ENCODE measurements at regions of chr3 and their contacts with region 1.

Region 1: DNA sequence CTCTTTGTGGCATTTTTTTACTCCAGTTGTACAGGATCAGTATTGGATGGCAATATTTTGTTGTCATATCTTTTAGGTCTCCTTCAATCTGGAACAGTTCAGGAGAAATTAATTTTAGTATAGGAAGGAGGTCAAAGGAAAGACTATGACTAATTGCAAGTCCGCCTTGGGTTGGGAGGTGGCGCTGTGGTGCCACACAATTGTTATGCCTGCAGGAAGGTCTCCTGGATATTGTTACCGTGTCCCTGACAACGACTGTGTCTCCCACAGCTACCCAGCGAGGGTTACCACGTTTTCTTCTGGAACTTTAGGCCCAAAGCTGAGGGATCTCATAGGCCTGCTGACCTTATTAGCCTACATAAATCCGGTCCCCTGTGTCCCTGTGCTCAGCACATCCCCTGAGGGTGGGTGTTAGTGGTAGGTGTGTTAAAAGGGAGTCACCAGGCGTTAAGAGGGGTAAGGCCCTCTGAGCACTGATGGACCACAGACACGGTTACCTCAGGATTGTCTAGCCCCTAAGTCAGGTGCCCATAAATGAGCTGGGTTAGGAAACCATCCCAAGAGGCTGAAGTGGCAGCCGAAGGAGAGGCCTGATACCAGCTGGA is 31.5 kb downstream of the KCNAB1 start:
- DNase-seq: peak; percentile 75
- H3K4me3 ChIP-seq: no peak overlapping the region
- H3K27ac ChIP-seq: no peak overlapping the region
- H3K4me1 ChIP-seq: peaks cover 19% of the 10 kb centered on the region
- H3K27me3 ChIP-seq: peaks cover 0 to 1% of the 10 kb centered on the region in 2 experiments
- CTCF ChIP-seq: peak; percentile 77 to 81
- POLR2A ChIP-seq: no peak

Region 2: GRCh38 chr3:155995525-155996351 is 156.2 kb before region 1 on chr3:
- CTCF ChIA-PET with region 1: no interaction called
- POLR2A ChIA-PET with region 1: no interaction called
- dilution Hi-C with region 1: no loop called
- intact Hi-C with region 1: loop called (anchors 2 kb)
- DNase-seq: peak; percentile 43
- H3K4me3 ChIP-seq: no peak overlapping the region
- H3K27ac ChIP-seq: no peak overlapping the region
- H3K4me1 ChIP-seq: no peaks in the 10 kb centered on the region
- H3K27me3 ChIP-seq: peaks cover 0 to 2% of the 10 kb centered on the region in 2 experiments
- CTCF ChIP-seq: peak; percentile 34 to 38
- POLR2A ChIP-seq: no peak

Region 3: DNA sequence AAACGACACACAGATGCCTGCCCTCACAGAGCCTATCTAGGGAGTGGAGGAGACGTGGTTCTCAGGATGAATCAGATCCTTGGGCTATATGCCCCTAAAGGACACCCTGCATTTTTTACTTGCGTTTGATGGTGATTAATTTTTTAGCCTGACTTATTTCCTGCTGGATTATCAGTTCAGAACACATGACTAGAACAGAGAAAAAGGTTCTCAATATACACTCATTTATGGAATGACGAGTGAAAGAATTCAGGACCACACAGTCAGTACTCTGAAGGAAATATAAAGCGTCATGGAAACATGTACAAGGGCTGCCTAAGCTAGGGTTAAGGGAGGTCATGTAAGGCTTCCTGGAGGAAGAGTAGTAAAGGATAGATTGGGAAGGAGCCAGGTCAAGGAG is 281.2 kb after region 1 on chr3:
- CTCF ChIA-PET with region 1: interaction called, 10 read pairs
- POLR2A ChIA-PET with region 1: no interaction called
- dilution Hi-C with region 1: no loop called
- intact Hi-C with region 1: loop called (anchors 5 kb)
- DNase-seq: peak; percentile 92
- H3K4me3 ChIP-seq: no peak overlapping the region
- H3K27ac ChIP-seq: peak overlapping the region; percentile 48
- H3K4me1 ChIP-seq: peaks cover 25% of the 10 kb centered on the region
- H3K27me3 ChIP-seq: no peaks in the 10 kb centered on the region
- CTCF ChIP-seq: no peak
- POLR2A ChIP-seq: no peak

Region 4: DNA sequence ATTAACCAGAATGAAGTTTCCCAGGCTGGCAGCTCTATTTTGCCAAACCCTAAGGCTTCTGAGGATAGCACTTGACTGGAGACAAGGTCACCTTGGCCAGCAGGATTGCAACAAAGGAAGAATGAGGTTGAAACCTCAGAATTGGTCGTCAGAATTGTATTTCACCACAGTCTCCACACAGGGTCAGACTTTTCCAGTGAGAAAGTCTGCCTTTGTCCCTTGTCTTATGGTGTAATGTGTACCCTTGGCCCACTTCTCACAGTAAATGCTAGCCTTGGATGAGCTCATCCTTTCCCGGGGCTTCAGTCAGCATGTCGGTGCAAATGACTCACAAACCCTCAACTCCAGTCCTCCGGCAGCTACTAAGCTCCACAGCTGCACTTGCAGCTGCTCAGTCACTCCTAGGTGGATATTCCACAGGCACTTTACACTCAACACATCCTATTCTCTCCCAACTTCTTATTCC is 383.3 kb after region 1 on chr3:
- CTCF ChIA-PET with region 1: interaction called, 23 read pairs
- POLR2A ChIA-PET with region 1: no interaction called
- dilution Hi-C with region 1: no loop called
- intact Hi-C with region 1: loop called (anchors 2 kb)
- DNase-seq: peak; percentile 94
- H3K4me3 ChIP-seq: no peak overlapping the region
- H3K27ac ChIP-seq: peak overlapping the region; percentile 55
- H3K4me1 ChIP-seq: peaks cover 7% of the 10 kb centered on the region
- H3K27me3 ChIP-seq: no peaks in the 10 kb centered on the region
- CTCF ChIP-seq: peak in 1 of 2 donors; percentile 22
- POLR2A ChIP-seq: peak; percentile 58

Region 5: GRCh38 chr3:156826144-156826895 is 674.4 kb after region 1 on chr3 and contains the start of gene LEKR1:
- CTCF ChIA-PET with region 1: no interaction called
- POLR2A ChIA-PET with region 1: no interaction called
- dilution Hi-C with region 1: no loop called
- intact Hi-C with region 1: loop called (anchors 10 kb)
- DNase-seq: peak; percentile 89
- H3K4me3 ChIP-seq: peak within 1 kb of the TSS; percentile 45 to 90 (median 55)
- H3K27ac ChIP-seq: peak within 1 kb of the TSS; percentile 100
- H3K4me1 ChIP-seq: peaks cover 20% of the 10 kb centered on the region
- H3K27me3 ChIP-seq: no peaks in the 10 kb centered on the region
- CTCF ChIP-seq: no peak
- POLR2A ChIP-seq: peak; percentile 53
- total RNA-seq, gene LEKR1: 0.21 and 0.64 TPM in 2 replicates

Region 6: GRCh38 chr3:157130467-157131251 is 978.7 kb after region 1 on chr3:
- CTCF ChIA-PET with region 1: interaction called, 11 read pairs
- POLR2A ChIA-PET with region 1: no interaction called
- dilution Hi-C with region 1: no loop called
- intact Hi-C with region 1: loop called (anchors 1 kb)
- DNase-seq: peak; percentile 61
- H3K4me3 ChIP-seq: no peak overlapping the region
- H3K27ac ChIP-seq: peak overlapping the region; percentile 60
- H3K4me1 ChIP-seq: peaks cover 39% of the 10 kb centered on the region
- H3K27me3 ChIP-seq: no peaks in the 10 kb centered on the region
- CTCF ChIP-seq: peak; percentile 58 to 59
- POLR2A ChIP-seq: no peak

Measured in endothelial cell of umbilical vein (primary cell).